BJ (cell line): ENCODE measurements at regions of chr17 and their contacts with region 1.

Region 1: GRCh38 chr17:30176855-30177254 is 58.6 kb downstream of the SLC6A4 start:
- DNase-seq: no peak
- H3K4me3 ChIP-seq: no peak overlapping the region
- H3K27me3 ChIP-seq: no peaks in the 10 kb centered on the region
- CTCF ChIP-seq: no peak

Region 2: GRCh38 chr17:30161601-30162000 is 15.3 kb before region 1 on chr17:
- CTCF ChIA-PET with region 1: interaction called, 3 read pairs
- POLR2A ChIA-PET with region 1: interaction called, 11 read pairs
- DNase-seq: no peak
- H3K4me3 ChIP-seq: no peak overlapping the region
- H3K27me3 ChIP-seq: no peaks in the 10 kb centered on the region
- CTCF ChIP-seq: no peak